GM12878 (cell line): ENCODE measurements at regions of chr12 and their contacts with region 1.

Region 1: GRCh38 chr12:76559400-76560085 is at the start of gene OSBPL8:
- DNase-seq: peak; percentile 71
- ATAC-seq: peak; percentile 85
- H3K4me3 ChIP-seq: peak within 1 kb of the TSS; percentile 98
- H3K27ac ChIP-seq: peak within 1 kb of the TSS; percentile 96
- H3K4me1 ChIP-seq: peaks cover 3% of the 10 kb centered on the region; the same call in 1 of the 2 replicates
- H3K27me3 ChIP-seq: no peaks in the 10 kb centered on the region
- CTCF ChIP-seq: peak; percentile 13 to 42 (median 13); a peak in 3 of 6 replicates
- EP300 ChIP-seq: 0 out of 4 replicates have a peak, but pooled peaks of 1 of the 2 experiments have one; percentile 25
- POLR2A ChIP-seq: peak; percentile 99
- RAD21 ChIP-seq: 0 out of 2 replicates have a peak, but pooled peaks have one; percentile 22
- polyA plus RNA-seq, gene OSBPL8: 10.4 to 13.7 TPM

Region 2: DNA sequence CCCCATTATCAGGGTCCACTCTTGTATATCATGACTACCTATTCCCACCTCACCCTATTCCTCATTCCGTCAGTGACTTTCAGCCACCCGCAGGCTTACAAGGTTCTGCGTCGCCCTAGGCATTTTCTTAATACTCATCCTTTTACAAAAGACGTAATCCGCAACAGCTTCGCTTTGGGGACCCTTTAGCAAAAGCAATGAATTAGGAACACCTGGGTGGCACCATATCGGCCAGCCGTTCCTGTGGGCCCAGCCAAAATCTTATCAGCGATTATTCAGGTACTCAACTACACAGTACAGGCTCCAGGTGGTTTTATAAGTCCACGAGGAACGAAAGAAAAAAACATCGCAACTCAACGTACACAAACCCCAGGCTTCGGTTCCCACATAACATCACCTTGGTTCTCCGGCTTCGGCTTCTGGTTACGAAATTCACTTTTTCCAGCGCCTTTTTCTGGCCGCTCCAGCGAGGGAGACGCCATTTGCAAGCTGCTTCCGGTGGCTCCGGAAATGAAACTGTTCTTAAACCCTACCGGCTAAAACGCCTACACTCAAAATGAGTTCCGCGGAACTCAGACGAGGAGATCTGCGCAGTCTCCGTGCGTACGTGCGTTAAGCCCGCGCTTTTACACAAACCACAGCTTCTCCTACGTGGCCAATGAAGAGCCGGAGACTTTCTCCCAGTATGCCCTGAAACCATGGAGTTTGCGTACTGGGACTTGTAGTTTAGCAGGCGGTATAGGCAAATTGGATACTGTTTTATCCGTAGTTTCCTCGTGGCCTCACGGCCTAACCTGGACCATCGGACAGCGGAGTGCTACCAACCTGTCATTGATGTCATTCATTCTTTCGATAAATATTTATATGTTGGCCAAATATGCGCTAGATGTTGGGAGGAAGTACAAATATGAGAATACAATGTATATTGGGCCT is 1048.2 kb before region 1 on chr12 and contains the start of gene KRR1:
- CTCF ChIA-PET with region 1: no interaction called
- POLR2A ChIA-PET with region 1: no interaction called
- RAD21 ChIA-PET with region 1: no interaction called
- SMC1A ChIA-PET with region 1: no interaction called
- in situ Hi-C with region 1: no loop called
- intact Hi-C with region 1: loop called (anchors 5 kb)
- DNase-seq: peak; percentile 89
- ATAC-seq: peak; percentile 93
- H3K4me3 ChIP-seq: peak within 1 kb of the TSS; percentile 76
- H3K27ac ChIP-seq: peak within 1 kb of the TSS; percentile 85
- H3K4me1 ChIP-seq: no peaks in the 10 kb centered on the region; the same call in 1 of the 2 replicates
- H3K27me3 ChIP-seq: no peaks in the 10 kb centered on the region
- CTCF ChIP-seq: no peak
- EP300 ChIP-seq: no peak
- POLR2A ChIP-seq: peak; percentile 77
- RAD21 ChIP-seq: no peak
- polyA plus RNA-seq, gene KRR1: 74.4 to 81.0 TPM

Region 3: DNA sequence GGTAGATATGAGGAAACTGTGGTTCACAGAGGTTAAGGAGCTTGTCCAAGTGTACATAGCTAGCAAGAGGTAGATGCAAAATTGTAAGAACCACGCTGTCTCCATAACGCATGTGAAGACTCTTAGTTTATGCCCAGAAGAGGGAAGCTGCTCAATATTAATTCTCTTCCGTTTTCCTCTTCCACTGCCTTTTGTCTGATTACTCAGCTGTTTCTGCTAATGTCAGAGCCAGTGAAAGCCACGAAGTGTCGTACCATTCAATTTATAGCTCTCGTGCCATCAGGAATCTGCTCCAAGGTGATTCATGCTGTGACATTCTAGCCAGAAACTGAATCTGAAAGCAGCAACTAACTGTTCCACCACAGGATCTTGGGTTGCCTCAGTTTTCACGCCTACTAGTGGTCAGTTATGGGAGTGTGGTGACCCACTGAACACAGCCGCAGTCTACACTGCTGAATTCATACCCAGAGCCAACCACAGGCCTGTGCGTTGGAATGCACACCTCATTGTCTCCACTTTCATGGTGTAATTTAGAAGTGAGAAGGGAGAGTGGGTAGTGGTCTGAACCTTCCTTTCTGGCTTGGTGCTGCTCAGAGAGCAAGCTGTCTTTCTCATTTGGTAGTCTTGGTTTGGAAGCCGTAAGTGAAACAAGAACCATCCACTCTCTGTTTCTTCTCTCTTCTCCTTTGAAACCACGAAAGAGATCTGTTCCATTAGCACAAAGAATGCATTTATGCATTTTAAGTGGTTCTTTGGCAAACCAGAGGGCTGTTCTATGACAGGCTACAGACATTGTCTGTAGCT is 400.8 kb before region 1 on chr12:
- CTCF ChIA-PET with region 1: no interaction called
- POLR2A ChIA-PET with region 1: no interaction called
- RAD21 ChIA-PET with region 1: no interaction called
- SMC1A ChIA-PET with region 1: no interaction called
- in situ Hi-C with region 1: no loop called
- intact Hi-C with region 1: loop called (anchors 10 kb)
- DNase-seq: peak; percentile 91
- ATAC-seq: peak; percentile 98
- H3K4me3 ChIP-seq: 0 out of 2 replicates have a peak overlapping the region, but pooled peaks have one; percentile 16
- H3K27ac ChIP-seq: peak overlapping the region; percentile 29; the same call in 1 of the 2 replicates
- H3K4me1 ChIP-seq: peaks cover 14% of the 10 kb centered on the region
- H3K27me3 ChIP-seq: no peaks in the 10 kb centered on the region
- CTCF ChIP-seq: peak; percentile 77 to 79 (median 78)
- EP300 ChIP-seq: peak; percentile 77 to 89
- POLR2A ChIP-seq: no peak
- RAD21 ChIP-seq: peak; percentile 68

Region 4: GRCh38 chr12:76455582-76456345 is 103.8 kb before region 1 on chr12:
- CTCF ChIA-PET with region 1: interaction called, 13 read pairs
- POLR2A ChIA-PET with region 1: interaction called, 3 read pairs
- RAD21 ChIA-PET with region 1: interaction called, 6 read pairs
- SMC1A ChIA-PET with region 1: interaction called, 5 read pairs
- in situ Hi-C with region 1: no loop called
- intact Hi-C with region 1: no loop called
- DNase-seq: peak; percentile 33
- ATAC-seq: peak; percentile 99
- H3K4me3 ChIP-seq: no peak overlapping the region
- H3K27ac ChIP-seq: no peak overlapping the region
- H3K4me1 ChIP-seq: no peaks in the 10 kb centered on the region
- H3K27me3 ChIP-seq: no peaks in the 10 kb centered on the region
- CTCF ChIP-seq: peak; percentile 54 to 73 (median 71); a peak in 5 of 6 replicates
- EP300 ChIP-seq: no peak
- POLR2A ChIP-seq: no peak
- RAD21 ChIP-seq: peak; percentile 89

Region 5: GRCh38 chr12:76520351-76520750 is 39.2 kb before region 1 on chr12:
- CTCF ChIA-PET with region 1: no interaction called
- POLR2A ChIA-PET with region 1: no interaction called
- RAD21 ChIA-PET with region 1: no interaction called
- SMC1A ChIA-PET with region 1: no interaction called
- in situ Hi-C with region 1: no loop called
- intact Hi-C with region 1: no loop called
- DNase-seq: no peak
- ATAC-seq: no peak
- H3K4me3 ChIP-seq: no peak overlapping the region
- H3K27ac ChIP-seq: no peak overlapping the region
- H3K4me1 ChIP-seq: no peaks in the 10 kb centered on the region
- H3K27me3 ChIP-seq: no peaks in the 10 kb centered on the region
- CTCF ChIP-seq: no peak
- EP300 ChIP-seq: no peak
- POLR2A ChIP-seq: no peak
- RAD21 ChIP-seq: no peak

Region 6: DNA sequence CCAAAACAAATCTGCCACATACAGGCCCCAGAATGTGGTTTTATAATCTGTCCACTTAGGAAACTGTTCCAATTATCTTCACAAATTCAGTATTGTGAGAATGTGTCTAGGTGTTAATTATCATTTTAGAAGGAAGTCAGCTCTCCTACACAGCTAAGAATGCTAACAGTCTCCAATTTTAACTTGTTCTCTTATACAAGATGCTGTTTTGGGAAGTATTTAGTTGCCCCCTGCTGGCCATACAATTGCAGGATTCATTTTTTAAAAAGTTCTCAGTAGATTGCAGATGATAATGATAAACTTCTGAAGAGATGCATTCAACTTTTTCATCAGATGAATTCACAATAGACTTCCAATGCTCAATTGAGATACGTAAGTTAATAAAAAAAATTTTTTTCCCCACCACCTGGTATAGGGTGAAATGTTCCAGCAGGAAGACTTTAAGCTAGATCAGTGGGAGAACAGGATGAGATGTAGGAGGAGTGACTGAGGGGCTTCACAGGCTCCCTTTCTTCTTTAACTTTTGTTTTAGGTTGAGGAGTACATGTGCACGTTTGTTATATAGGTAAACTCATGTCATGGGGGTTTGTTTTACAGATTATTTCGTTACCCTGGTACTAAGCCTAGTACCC is 27.3 kb after region 1 on chr12:
- CTCF ChIA-PET with region 1: interaction called, 20 read pairs
- POLR2A ChIA-PET with region 1: interaction called, 3 read pairs
- RAD21 ChIA-PET with region 1: interaction called, 4 read pairs
- SMC1A ChIA-PET with region 1: interaction called, 6 read pairs
- in situ Hi-C with region 1: no loop called
- intact Hi-C with region 1: no loop called
- DNase-seq: no peak
- ATAC-seq: peak; percentile 82
- H3K4me3 ChIP-seq: no peak overlapping the region
- H3K27ac ChIP-seq: no peak overlapping the region
- H3K4me1 ChIP-seq: no peaks in the 10 kb centered on the region
- H3K27me3 ChIP-seq: no peaks in the 10 kb centered on the region
- CTCF ChIP-seq: peak; percentile 54 to 69 (median 68); a peak in 5 of 6 replicates
- EP300 ChIP-seq: no peak
- POLR2A ChIP-seq: no peak
- RAD21 ChIP-seq: peak; percentile 85